Common myeloid progenitor, CD34-positive (primary cell): ENCODE measurements at regions of chr3 and their contacts with region 1.

Region 1: DNA sequence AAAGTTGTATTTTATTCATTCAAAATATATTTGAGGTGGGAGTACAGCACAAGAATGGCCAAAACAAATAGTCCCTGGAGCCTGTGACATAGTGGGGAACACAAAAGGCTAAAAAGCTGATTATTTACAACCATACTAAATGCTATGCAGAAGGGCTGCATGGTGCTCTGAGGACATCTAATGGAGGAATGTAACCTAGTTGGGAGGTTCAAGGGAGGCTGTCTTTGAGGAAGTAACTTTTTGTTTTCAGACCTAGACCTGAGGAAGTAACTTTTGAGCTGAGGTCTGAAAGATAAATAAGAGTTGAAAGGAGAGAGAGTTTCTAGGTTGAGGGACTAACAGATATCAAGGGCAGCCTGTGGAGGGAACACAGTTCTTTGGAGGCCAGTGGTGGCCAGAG is 34.8 kb upstream of the RASA2 start:
- DNase-seq: peak; percentile 86 to 94 (median 93)
- H3K4me3 ChIP-seq: no peak overlapping the region
- H3K27ac ChIP-seq: peak overlapping the region; percentile 2 to 46
- H3K4me1 ChIP-seq: peaks cover 4 to 16% (median 10%) of the 10 kb centered on the region in 4 experiments
- H3K27me3 ChIP-seq: no peaks in the 10 kb centered on the region

Region 2: GRCh38 chr3:141303481-141304223 is 148.4 kb before region 1 on chr3:
- CTCF ChIA-PET with region 1: interaction called, 240 read pairs
- POLR2A ChIA-PET with region 1: no interaction called
- DNase-seq: peak; percentile 83 to 91 (median 87)
- H3K4me3 ChIP-seq: peak overlapping the region in 1 of 7 experiments; percentile 20
- H3K27ac ChIP-seq: no peak overlapping the region
- H3K4me1 ChIP-seq: peaks cover 0 to 5% (median 4%) of the 10 kb centered on the region in 4 experiments
- H3K27me3 ChIP-seq: no peaks in the 10 kb centered on the region

Region 3: GRCh38 chr3:141311496-141312353 is 140.3 kb before region 1 on chr3:
- CTCF ChIA-PET with region 1: interaction called, 240 read pairs
- POLR2A ChIA-PET with region 1: interaction called, 3 read pairs
- DNase-seq: peak; percentile 98 to 99 (median 98)
- H3K4me3 ChIP-seq: peak overlapping the region; percentile 82 to 93 (median 85)
- H3K27ac ChIP-seq: peak overlapping the region; percentile 30 to 74
- H3K4me1 ChIP-seq: peaks cover 4 to 21% (median 19%) of the 10 kb centered on the region in 4 experiments
- H3K27me3 ChIP-seq: no peaks in the 10 kb centered on the region

Region 4: DNA sequence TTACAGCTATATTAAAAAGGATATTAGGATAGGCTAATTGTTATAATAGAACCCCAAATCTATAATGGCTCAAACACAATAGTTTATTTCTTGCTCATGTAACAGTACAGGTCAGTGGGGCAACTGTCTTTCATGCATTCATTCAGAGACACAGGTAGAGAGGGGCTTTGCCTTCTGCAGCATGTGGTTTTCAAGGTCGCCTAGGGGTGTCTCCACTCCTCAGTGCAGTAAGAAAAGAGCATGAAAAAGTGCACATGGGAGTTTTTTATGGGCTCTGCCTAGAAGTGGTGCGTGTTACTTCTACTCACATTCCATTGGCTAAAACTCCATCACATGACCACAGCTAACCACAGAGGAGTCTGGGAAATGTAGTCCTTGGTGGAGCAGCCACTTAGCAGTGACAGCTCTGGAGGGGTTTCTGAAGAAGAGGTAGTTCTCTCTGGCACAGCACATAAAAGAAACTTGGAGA is 81.9 kb before region 1 on chr3:
- CTCF ChIA-PET with region 1: interaction called, 27 read pairs
- POLR2A ChIA-PET with region 1: no interaction called
- DNase-seq: peak; percentile 93 to 96 (median 96)
- H3K4me3 ChIP-seq: no peak overlapping the region
- H3K27ac ChIP-seq: peak overlapping the region in 1 of 2 experiments; percentile 64
- H3K4me1 ChIP-seq: peaks cover 0 to 18% (median 8%) of the 10 kb centered on the region in 4 experiments
- H3K27me3 ChIP-seq: no peaks in the 10 kb centered on the region

Region 5: DNA sequence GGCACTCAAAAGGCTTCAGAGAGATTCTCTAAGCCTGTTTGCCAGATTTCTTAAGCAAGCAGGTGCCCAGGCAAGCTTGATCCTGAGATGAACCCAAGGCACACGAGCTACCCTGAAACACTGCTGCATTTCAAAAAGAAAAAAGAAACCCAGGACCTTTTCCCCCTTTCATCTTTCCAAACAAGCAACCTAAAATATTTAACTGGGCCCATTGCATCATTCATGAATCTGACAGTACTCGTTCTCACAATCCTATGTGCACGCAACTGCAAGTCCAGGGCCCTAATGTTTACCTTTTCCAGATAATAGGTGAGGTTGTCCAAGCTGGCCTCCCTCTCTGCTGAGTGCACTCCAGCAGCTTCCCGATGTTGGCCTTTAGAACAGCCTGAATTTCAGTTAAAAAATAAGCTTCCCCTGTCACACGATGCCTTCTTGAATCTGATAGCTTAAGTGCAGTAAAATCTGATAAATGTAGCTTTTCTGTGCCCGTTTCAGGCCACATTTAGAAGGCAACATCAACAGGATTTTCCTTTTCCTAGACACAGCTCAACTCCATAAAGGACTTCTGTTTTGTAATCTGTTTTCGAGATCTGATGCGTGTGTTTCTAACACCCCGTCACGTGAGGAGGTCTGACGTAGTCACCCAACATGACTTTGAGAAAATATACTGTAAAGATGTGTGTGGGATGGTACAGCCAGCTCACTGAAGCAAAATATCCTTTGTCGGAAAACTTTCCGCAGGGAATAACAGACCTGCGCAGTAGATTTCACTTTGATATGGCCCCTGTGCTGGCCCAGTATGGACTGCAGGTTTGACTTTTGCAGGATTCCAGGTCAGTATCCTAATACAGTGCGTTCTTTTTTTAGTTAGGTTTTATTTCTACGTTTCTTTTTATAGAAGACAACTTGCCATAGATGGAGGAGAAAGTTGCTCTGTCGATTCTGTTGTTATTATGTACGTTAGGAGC is 20.3 kb before region 1 on chr3:
- CTCF ChIA-PET with region 1: interaction called, 14 read pairs
- POLR2A ChIA-PET with region 1: no interaction called
- DNase-seq: no peak
- H3K4me3 ChIP-seq: no peak overlapping the region
- H3K27ac ChIP-seq: no peak overlapping the region
- H3K4me1 ChIP-seq: peaks cover 0 to 7% (median 2%) of the 10 kb centered on the region in 4 experiments
- H3K27me3 ChIP-seq: no peaks in the 10 kb centered on the region

Region 6: DNA sequence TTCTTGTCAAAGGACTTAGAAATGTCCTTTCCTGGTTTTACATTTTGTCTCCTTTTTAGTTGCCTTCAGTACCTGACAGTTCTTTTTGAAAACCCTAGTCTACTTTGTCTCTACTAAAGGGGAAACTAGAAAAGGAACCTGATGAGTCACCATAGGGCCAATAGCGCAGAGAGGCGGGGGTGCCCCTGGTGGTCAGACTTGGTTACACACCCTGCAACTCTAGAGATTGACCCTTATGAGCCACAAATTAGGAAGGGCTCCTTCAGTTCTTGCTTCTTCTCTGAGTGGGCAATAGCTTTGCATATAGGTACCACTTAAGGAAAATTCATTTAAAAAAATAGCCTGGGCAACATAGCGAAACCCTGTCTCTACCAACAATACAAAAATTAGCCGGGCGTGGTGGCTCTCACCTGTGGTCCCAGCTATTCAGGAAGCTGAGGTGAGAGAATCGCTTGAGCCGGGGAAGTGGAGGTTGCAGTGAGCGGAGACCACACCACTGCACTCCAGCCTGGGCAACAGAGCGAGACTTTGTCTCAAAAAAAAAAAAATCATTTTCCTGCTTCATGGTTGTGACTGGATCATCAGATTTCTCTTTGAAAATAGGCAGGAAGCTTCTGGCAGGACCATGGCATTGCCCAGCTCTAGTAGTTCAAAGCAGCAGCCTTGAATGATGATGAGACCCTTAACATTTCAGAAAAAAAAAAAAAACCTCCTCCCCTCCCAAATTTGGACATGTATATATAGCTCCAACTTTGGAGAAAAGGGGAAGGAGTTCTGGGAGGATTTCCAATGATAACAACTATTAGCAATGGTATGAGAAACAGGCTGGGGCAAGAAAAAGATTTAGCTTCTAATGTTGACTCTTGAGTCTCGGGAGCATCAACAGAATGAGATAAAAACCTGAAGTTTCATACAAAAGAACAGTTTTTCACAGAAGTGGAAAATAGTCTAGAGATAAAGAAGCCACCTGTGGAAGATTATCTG is 10.4 kb before region 1 on chr3:
- CTCF ChIA-PET with region 1: interaction called, 45 read pairs
- POLR2A ChIA-PET with region 1: interaction called, 3 read pairs
- DNase-seq: peak; percentile 79 to 89 (median 88)
- H3K4me3 ChIP-seq: peak overlapping the region in 1 of 7 experiments; percentile 35
- H3K27ac ChIP-seq: peak overlapping the region in 1 of 2 experiments; percentile 62
- H3K4me1 ChIP-seq: peaks cover 0 to 4% (median 2%) of the 10 kb centered on the region in 4 experiments
- H3K27me3 ChIP-seq: no peaks in the 10 kb centered on the region

Region 7: DNA sequence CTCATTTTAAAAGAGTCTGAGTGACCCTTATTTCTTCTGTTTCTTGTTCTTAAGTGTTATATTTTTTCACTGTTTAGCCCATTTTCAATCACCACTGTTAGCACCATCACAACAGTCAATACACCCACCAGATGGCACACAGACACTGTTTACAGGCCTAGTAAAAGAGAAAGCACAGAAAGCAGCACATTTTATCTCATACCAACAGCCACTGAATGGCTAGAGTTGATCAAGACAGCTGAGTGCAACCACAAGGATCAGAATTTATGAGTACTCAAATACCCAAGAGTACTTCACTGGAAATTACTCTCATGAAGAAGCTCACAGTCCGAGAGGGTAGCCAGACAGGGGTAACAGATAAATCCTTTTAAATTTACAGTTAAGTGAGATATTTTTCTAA is 570.3 kb after region 1 on chr3:
- CTCF ChIA-PET with region 1: no interaction called
- POLR2A ChIA-PET with region 1: no interaction called
- DNase-seq: peak; percentile 88 to 97 (median 94)
- H3K4me3 ChIP-seq: peak overlapping the region in 2 of 7 experiments; percentile 36 to 47
- H3K27ac ChIP-seq: peak overlapping the region; percentile 2 to 64
- H3K4me1 ChIP-seq: peaks cover 21 to 52% (median 36%) of the 10 kb centered on the region in 4 experiments
- H3K27me3 ChIP-seq: no peaks in the 10 kb centered on the region